CD4-positive, alpha-beta memory T cell (primary cell): ENCODE measurements at regions of chr3 and their contacts with region 1.

Region 1: GRCh38 chr3:28328188-28329151 is 20.1 kb upstream of the ZCWPW2 start:
- DNase-seq: peak in 4 of 5 donors; percentile 51 to 62 (median 53)
- H3K4me3 ChIP-seq: no peak overlapping the region
- H3K4me3 Mint-ChIP-seq: no peak overlapping the region
- H3K27ac ChIP-seq: no peak overlapping the region
- H3K27ac Mint-ChIP-seq: peak overlapping the region in 2 of 7 donors; percentile 42 to 55
- H3K4me1 ChIP-seq: peaks cover 21% of the 10 kb centered on the region
- H3K4me1 Mint-ChIP-seq: peaks cover 12 to 27% (median 19%) of the 10 kb centered on the region in 4 donors
- H3K27me3 ChIP-seq: no peaks in the 10 kb centered on the region
- H3K27me3 Mint-ChIP-seq: no peaks in the 10 kb centered on the region

Region 2: DNA sequence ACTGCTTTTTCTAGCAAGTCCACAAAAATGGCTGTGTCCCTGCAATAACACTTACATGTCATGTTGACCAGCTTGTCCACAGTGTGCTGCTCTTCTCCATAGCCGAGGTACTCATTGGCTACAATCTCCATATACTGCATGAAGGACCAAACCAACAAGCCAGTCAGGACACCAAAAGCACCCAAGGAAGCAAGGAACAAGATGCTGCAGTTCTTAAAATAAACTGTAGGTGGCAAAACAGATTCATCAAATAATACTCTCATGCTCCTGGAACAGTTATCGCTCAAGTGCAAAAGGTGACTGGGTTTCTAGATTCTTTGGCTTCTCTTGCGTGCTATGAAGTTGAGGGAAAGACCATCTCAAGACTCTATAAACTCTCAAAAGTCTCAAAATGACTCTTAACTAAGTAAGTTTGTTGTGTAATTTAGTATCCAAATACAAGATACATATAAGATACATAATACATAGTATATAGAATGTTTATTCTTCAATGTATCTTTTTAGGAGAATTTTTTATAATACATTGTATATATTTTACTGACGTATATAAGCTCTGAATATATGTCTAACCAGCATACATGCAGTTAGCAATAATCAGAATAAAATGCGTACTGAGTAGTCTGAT is 1016.3 kb before region 1 on chr3:
- CTCF ChIA-PET with region 1: no interaction called
- POLR2A ChIA-PET with region 1: no interaction called
- intact Hi-C with region 1: loop called (anchors 2 kb)
- DNase-seq: peak in 4 of 5 donors; percentile 52 to 60 (median 59)
- H3K4me3 ChIP-seq: no peak overlapping the region
- H3K4me3 Mint-ChIP-seq: no peak overlapping the region
- H3K27ac ChIP-seq: no peak overlapping the region
- H3K27ac Mint-ChIP-seq: peak overlapping the region in 1 of 7 donors; percentile 5
- H3K4me1 ChIP-seq: no peaks in the 10 kb centered on the region
- H3K4me1 Mint-ChIP-seq: no peaks in the 10 kb centered on the region
- H3K27me3 ChIP-seq: no peaks in the 10 kb centered on the region
- H3K27me3 Mint-ChIP-seq: no peaks in the 10 kb centered on the region

Region 3: DNA sequence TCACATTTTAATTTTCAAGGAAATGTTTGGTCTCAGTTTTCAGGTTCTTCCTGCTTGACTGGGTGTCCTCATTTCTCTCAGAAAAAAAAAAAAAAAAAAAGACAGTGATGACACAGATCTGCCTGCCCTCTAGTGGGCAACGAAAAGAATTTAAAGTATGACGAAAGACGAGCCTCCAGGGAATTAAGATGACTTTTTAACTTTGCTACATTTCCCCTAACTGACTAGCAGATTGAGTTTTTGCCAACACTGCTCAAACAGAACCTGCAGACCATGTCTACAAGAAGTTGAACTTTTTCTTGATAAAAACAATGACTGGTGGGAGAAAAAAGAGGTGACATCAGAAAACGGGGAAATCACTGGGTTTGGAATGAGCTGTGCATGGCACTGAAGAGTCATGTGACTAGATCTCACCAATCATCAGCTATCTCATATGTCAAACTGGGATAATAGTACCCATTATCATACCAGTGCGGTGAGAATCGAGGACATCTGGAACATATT is 647.2 kb before region 1 on chr3:
- CTCF ChIA-PET with region 1: interaction called, 16 read pairs
- POLR2A ChIA-PET with region 1: no interaction called
- intact Hi-C with region 1: no loop called
- DNase-seq: peak; percentile 31 to 73 (median 69)
- H3K4me3 ChIP-seq: no peak overlapping the region
- H3K4me3 Mint-ChIP-seq: peak overlapping the region; percentile 17 to 78 (median 71)
- H3K27ac ChIP-seq: no peak overlapping the region
- H3K27ac Mint-ChIP-seq: peak overlapping the region; percentile 2 to 77 (median 29)
- H3K4me1 ChIP-seq: peaks cover 12% of the 10 kb centered on the region
- H3K4me1 Mint-ChIP-seq: peaks cover 5 to 19% (median 14%) of the 10 kb centered on the region in 4 donors
- H3K27me3 ChIP-seq: no peaks in the 10 kb centered on the region
- H3K27me3 Mint-ChIP-seq: peaks cover 3 to 6% of the 10 kb centered on the region in 2 donors

Region 4: DNA sequence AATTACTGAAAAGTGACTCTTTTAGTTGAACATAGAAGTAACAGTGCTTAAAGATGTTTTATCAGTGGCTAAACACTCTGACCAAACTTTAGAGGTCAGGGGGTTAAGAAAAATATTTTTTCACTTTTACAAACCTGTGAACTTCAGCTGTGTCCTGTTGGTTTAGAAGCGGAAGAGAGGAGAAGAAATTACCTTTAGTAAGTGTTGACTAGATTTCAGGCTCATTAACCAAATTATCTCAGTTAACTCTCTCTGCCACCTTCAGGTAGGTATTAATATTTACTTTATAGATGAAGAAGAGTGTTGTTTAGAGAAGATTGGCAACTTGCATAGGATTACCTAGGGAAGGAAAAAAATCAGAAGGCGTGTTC is 239.0 kb before region 1 on chr3:
- CTCF ChIA-PET with region 1: no interaction called
- POLR2A ChIA-PET with region 1: no interaction called
- intact Hi-C with region 1: loop called (anchors 1 kb)
- DNase-seq: no peak
- H3K4me3 ChIP-seq: no peak overlapping the region
- H3K4me3 Mint-ChIP-seq: no peak overlapping the region
- H3K27ac ChIP-seq: no peak overlapping the region
- H3K27ac Mint-ChIP-seq: peak overlapping the region in 1 of 7 donors; percentile 58
- H3K4me1 ChIP-seq: no peaks in the 10 kb centered on the region
- H3K4me1 Mint-ChIP-seq: peaks cover 0 to 4% (median under 1%) of the 10 kb centered on the region in 4 donors
- H3K27me3 ChIP-seq: no peaks in the 10 kb centered on the region
- H3K27me3 Mint-ChIP-seq: no peaks in the 10 kb centered on the region

Region 5: DNA sequence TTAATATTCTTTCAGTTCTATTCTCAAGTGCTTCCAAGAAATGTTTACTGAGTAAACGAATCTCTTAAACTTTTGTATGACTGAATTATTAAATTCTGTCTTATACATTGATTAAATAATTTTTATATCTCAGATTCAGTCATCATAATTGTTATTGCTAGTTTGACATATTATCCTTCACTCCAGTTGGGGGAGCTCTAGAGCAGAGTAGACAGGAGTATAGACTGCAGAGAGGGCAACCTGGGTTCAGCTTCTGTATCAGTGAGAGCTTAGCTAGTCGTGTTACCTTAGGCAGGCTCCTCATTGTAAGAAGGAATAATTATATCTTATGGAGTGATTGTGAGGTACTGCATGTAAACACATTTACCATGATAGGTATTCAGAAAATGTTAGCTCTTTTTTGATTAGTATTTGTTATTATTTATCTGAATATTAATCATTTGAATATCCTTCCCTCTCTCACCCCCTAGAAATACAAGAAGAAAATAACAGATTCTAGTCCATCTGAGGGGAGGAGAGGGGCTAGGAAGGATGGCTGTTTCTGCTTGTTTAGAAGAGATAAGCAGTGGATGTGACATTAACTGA is 10.9 kb before region 1 on chr3:
- CTCF ChIA-PET with region 1: interaction called, 22 read pairs
- POLR2A ChIA-PET with region 1: interaction called, 10 read pairs
- intact Hi-C with region 1: loop called (anchors 1 kb)
- DNase-seq: peak; percentile 46 to 58 (median 55)
- H3K4me3 ChIP-seq: no peak overlapping the region
- H3K4me3 Mint-ChIP-seq: no peak overlapping the region
- H3K27ac ChIP-seq: no peak overlapping the region
- H3K27ac Mint-ChIP-seq: no peak overlapping the region
- H3K4me1 ChIP-seq: no peaks in the 10 kb centered on the region
- H3K4me1 Mint-ChIP-seq: peaks cover 3 to 17% (median 13%) of the 10 kb centered on the region in 4 donors
- H3K27me3 ChIP-seq: no peaks in the 10 kb centered on the region
- H3K27me3 Mint-ChIP-seq: no peaks in the 10 kb centered on the region

Region 6: GRCh38 chr3:28467414-28467813 is 138.9 kb after region 1 on chr3:
- CTCF ChIA-PET with region 1: no interaction called
- POLR2A ChIA-PET with region 1: no interaction called
- intact Hi-C with region 1: no loop called
- DNase-seq: no peak
- H3K4me3 ChIP-seq: no peak overlapping the region
- H3K4me3 Mint-ChIP-seq: no peak overlapping the region
- H3K27ac ChIP-seq: no peak overlapping the region
- H3K27ac Mint-ChIP-seq: no peak overlapping the region
- H3K4me1 ChIP-seq: no peaks in the 10 kb centered on the region
- H3K4me1 Mint-ChIP-seq: no peaks in the 10 kb centered on the region
- H3K27me3 ChIP-seq: no peaks in the 10 kb centered on the region
- H3K27me3 Mint-ChIP-seq: peaks cover 0 to 6% of the 10 kb centered on the region in 2 donors

Region 7: DNA sequence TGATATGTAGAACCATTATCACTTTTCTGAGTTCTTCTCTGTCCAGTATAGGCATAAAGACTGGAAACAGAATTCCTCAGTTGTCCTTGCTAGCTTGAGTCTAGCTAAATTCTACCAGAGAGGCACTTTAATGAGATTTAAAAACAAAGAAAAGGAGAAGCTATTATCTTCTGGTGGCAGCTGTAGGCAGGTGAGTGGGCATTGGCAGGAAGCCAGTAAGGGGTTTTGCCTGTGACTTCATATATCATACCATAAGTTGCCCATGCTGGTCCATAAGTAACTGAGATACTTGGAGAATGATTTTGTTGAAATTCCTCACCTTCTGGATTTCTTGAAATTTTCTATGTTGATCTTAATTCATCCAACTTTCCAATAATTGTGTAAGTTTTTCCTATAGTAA is 1875.7 kb after region 1 on chr3:
- CTCF ChIA-PET with region 1: no interaction called
- POLR2A ChIA-PET with region 1: no interaction called
- intact Hi-C with region 1: no loop called
- DNase-seq: no peak
- H3K4me3 ChIP-seq: no peak overlapping the region
- H3K4me3 Mint-ChIP-seq: no peak overlapping the region
- H3K27ac ChIP-seq: no peak overlapping the region
- H3K27ac Mint-ChIP-seq: no peak overlapping the region
- H3K4me1 ChIP-seq: peaks cover 4% of the 10 kb centered on the region
- H3K4me1 Mint-ChIP-seq: peaks cover 7 to 10% (median 8%) of the 10 kb centered on the region in 4 donors
- H3K27me3 ChIP-seq: no peaks in the 10 kb centered on the region
- H3K27me3 Mint-ChIP-seq: no peaks in the 10 kb centered on the region